AG04450 (cell line): ENCODE measurements at regions of chr14 and their contacts with region 1.

Region 1: DNA sequence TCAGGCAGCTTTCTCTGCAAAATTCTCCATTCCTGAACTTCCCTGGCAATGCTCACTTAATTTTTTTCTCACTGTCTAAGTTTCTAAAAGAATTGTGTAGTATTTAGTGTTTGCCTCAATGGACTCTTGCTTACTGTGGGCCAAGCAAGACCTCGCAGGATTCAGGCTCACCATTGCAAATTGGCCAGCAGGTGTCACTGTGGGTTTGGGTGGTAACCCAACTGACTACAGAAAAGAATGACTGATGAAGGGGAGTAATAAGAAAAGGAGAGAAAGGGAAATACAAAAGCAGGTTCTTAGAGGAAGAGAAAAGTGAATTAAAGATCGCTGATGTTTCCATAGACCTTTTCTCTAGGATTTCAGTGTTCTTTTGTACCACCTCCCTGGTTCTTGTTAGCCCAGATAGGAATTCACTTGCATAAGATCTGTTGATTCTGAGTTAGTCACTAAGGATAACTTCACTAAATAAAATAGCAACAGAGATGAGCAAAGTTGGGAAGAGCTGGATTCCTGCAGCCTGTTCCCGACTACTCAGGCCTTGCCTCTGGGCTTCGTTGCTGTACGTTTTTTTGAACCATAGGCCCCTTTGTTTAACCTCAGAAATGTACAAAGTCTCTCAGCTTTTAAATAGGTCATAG is 386.5 kb upstream of the DDHD1 start:
- DNase-seq: peak; percentile 70
- H3K4me3 ChIP-seq: no peak overlapping the region
- H3K27ac ChIP-seq: no peak overlapping the region
- H3K27me3 ChIP-seq: no peaks in the 10 kb centered on the region
- CTCF ChIP-seq: peak; percentile 92

Region 2: DNA sequence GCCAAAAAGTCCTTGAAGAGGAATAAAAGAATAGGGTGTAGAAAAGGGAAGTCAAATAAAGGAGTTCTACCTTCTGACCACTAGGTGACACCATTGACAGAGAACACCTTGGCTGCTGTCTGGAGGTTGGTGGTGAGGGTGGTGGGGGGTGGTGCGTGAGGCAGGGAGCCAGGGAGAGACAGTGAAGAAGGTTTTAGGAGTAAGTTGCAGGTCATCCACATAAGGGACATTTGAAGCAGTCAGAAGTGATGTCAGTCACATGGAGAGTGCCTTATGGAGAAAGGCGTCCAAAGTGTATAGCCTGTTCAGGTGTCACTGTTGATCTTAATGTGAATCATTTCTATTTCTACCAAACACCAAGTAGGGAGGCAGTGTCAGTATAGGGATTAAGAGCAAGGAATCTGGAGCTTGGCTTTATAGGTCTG is 107.2 kb before region 1 on chr14:
- CTCF ChIA-PET with region 1: interaction called, 10 read pairs
- POLR2A ChIA-PET with region 1: no interaction called
- DNase-seq: peak; percentile 32
- H3K4me3 ChIP-seq: no peak overlapping the region
- H3K27ac ChIP-seq: no peak overlapping the region
- H3K27me3 ChIP-seq: no peaks in the 10 kb centered on the region
- CTCF ChIP-seq: peak; percentile 71

Region 3: DNA sequence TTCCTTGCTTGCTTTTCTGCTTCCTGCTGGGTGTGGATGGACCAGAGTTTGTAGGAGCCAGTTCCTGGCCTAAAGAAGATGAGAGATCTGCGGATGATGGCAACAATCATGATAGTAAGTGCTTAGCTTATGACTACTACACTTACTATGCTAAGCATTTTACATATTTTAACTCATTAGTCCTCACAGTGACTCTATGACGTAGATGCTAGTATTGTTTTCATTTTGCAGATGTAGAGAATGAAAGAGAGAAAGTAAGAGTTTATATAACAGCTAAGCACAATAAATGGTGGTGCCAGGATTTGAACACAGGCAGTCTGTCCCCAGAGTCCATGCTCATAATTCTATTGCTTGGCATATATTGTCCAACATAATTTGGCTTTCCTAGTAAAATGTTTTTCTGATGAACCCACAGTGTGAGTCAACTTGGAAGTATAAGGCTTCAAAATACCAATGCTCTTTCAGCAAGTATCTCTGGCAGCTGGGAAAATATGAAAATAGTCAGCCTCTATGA is 23.3 kb before region 1 on chr14:
- CTCF ChIA-PET with region 1: interaction called, 6 read pairs
- POLR2A ChIA-PET with region 1: interaction called, 12 read pairs
- DNase-seq: peak; percentile 82
- H3K4me3 ChIP-seq: no peak overlapping the region
- H3K27ac ChIP-seq: peak overlapping the region; percentile 85
- H3K27me3 ChIP-seq: no peaks in the 10 kb centered on the region
- CTCF ChIP-seq: no peak

Region 4: GRCh38 chr14:53570411-53571387 is 31.1 kb after region 1 on chr14:
- CTCF ChIA-PET with region 1: interaction called, 14 read pairs
- POLR2A ChIA-PET with region 1: interaction called, 7 read pairs
- DNase-seq: no peak
- H3K4me3 ChIP-seq: no peak overlapping the region
- H3K27ac ChIP-seq: no peak overlapping the region
- H3K27me3 ChIP-seq: no peaks in the 10 kb centered on the region
- CTCF ChIP-seq: no peak

Region 5: GRCh38 chr14:53715193-53715721 is 175.6 kb after region 1 on chr14:
- CTCF ChIA-PET with region 1: no interaction called
- POLR2A ChIA-PET with region 1: no interaction called
- DNase-seq: no peak
- H3K4me3 ChIP-seq: no peak overlapping the region
- H3K27ac ChIP-seq: no peak overlapping the region
- H3K27me3 ChIP-seq: peaks cover 5% of the 10 kb centered on the region
- CTCF ChIP-seq: no peak

Region 6: DNA sequence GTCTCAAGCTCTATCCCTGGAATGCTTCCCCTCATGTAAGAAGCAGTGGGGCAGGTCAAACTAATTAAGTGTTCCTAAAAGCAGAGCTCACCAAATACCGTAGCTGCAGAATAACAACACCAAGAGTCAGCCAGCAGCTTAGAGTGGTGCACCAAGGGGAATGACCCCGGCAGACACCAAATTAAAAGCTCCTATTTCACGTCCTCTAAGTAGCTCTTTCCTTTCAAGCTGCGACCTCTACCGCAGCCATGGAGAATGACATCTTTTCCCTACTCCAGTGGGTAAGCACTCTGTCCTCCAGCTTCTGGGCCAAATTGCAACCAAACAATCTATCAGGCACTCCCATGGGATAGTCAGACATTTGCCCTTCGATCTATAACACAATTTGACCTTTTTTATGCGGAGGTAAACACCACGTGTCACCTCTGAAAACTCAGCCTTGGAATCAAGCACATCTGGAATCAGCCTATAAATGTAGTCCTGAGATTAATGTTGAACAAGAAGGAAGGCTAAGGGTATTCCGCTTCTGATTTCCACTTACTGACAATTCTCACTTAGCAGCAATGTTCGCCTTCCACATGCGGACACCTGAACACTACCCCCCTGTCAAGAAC is 789.6 kb after region 1 on chr14:
- CTCF ChIA-PET with region 1: interaction called, 30 read pairs
- POLR2A ChIA-PET with region 1: no interaction called
- DNase-seq: no peak
- H3K4me3 ChIP-seq: no peak overlapping the region
- H3K27ac ChIP-seq: no peak overlapping the region
- H3K27me3 ChIP-seq: peaks cover 26% of the 10 kb centered on the region
- CTCF ChIP-seq: peak; percentile 91